ENCODE measurements at regions of chr13 and their contacts with region 1.

Region 1: GRCh38 chr13:40682449-40683240 is 16.2 kb upstream of the FOXO1 start:
- DNase-seq: no peak
- ATAC-seq: no peak
- H3K4me3 Mint-ChIP-seq: peak overlapping the region; percentile 47
- H3K27ac Mint-ChIP-seq: peak overlapping the region; percentile 32
- H3K4me1 Mint-ChIP-seq: peaks cover 38% of the 10 kb centered on the region
- H3K27me3 Mint-ChIP-seq: peaks cover 22% of the 10 kb centered on the region
- CTCF ChIP-seq: peak; percentile 65

Region 2: GRCh38 chr13:40017662-40018262 is 664.9 kb before region 1 on chr13:
- CTCF ChIA-PET with region 1: interaction called, 12 read pairs
- POLR2A ChIA-PET with region 1: no interaction called
- DNase-seq: no peak
- ATAC-seq: peak; percentile 70
- H3K4me3 Mint-ChIP-seq: no peak overlapping the region
- H3K27ac Mint-ChIP-seq: peak overlapping the region; percentile 9; the same call in 1 of the 2 replicates
- H3K4me1 Mint-ChIP-seq: peaks cover 7% of the 10 kb centered on the region
- H3K27me3 Mint-ChIP-seq: no peaks in the 10 kb centered on the region
- CTCF ChIP-seq: no peak

Region 3: DNA sequence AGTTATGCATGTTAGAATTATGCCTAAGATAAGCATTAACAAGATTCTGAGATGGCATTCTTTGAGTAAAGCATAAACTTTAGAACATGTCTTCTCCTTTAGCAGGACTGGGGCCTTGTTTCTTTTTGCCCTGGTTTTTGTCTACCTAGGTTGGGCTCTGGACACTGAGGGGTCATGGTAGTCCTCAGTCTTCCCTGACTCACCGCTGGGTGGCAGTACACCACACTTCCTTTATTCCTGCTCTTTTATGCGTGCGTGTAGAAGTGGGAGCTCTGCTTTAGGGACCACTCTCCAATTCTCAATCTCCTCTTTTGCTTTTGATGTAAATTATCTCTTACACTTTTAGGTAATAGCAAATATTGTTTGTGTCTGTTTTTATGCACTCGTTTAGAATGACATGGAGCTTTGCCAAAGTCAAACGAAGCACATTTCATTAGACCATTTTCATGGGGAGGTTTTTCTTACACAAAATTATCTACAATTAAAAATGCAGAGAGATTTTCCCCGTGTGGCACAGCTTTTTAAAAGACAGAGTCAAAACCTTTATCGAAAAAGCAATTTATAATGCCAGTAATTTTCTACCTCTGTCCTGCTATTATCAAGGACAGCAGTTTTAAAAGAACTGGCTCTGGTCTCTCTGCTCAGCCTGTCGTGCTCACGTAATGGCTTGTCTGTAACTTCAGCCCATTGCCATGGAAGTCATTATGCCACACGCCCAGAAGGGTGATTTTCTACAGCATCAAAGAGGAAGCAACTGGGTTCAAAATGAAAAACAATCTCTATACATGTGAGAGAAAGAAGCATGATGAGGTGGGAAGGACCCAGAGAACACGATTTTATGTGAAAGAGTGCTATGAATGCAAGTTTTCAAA is 613.2 kb before region 1 on chr13:
- CTCF ChIA-PET with region 1: interaction called, 11 read pairs
- POLR2A ChIA-PET with region 1: no interaction called
- DNase-seq: peak; percentile 78
- ATAC-seq: peak; percentile 95
- H3K4me3 Mint-ChIP-seq: no peak overlapping the region
- H3K27ac Mint-ChIP-seq: no peak overlapping the region
- H3K4me1 Mint-ChIP-seq: peaks cover 19% of the 10 kb centered on the region
- H3K27me3 Mint-ChIP-seq: no peaks in the 10 kb centered on the region
- CTCF ChIP-seq: peak; percentile 76

Region 4: DNA sequence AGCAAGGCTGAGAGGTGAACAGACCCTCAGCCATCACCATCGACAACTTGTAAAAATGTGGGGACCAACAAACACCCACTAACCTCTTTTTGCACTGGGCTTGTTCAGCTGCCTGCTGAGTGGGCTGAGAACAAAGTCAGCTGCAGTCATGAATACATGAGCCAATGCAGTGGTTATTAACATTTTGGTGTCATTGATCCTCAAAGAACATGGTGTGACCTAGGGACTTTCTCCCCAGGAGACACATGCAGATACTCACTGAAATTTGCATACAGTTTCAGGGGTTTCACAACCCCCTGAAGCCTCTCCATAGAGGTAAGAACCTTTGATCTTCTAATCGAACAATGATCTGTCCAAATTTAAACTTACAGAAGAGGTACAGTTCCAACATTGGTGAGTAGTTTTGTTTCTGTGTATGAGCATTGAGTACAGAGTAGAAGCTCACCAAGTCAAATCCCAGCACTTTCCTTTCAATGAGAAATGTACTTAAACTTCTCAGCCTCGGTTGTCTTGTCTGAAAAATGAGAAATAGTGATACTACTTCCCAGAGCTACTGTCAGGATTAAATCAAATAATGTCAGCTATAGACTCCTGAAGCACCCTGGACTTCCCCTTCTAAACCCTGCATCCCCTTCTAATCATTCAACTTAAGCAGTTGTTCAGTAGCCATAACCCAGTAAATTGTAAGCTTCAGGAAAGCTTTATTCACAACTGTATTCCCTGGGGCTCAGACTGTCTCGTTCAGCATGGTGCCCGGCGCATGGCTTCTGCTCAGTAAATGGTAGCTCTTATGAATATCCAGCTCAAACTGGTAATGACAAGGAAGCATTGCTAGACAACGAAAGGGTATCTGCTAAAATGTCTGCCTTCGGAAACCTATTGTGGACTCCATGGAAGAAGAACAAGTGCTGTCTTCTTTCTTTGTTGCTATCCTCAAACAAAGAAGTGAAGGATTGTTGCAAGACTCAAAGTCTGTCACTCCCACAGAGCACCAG is 164.9 kb before region 1 on chr13:
- CTCF ChIA-PET with region 1: no interaction called
- POLR2A ChIA-PET with region 1: no interaction called
- DNase-seq: no peak
- ATAC-seq: no peak
- H3K4me3 Mint-ChIP-seq: no peak overlapping the region
- H3K27ac Mint-ChIP-seq: no peak overlapping the region
- H3K4me1 Mint-ChIP-seq: peaks cover 11% of the 10 kb centered on the region
- H3K27me3 Mint-ChIP-seq: no peaks in the 10 kb centered on the region
- CTCF ChIP-seq: no peak

Region 5: DNA sequence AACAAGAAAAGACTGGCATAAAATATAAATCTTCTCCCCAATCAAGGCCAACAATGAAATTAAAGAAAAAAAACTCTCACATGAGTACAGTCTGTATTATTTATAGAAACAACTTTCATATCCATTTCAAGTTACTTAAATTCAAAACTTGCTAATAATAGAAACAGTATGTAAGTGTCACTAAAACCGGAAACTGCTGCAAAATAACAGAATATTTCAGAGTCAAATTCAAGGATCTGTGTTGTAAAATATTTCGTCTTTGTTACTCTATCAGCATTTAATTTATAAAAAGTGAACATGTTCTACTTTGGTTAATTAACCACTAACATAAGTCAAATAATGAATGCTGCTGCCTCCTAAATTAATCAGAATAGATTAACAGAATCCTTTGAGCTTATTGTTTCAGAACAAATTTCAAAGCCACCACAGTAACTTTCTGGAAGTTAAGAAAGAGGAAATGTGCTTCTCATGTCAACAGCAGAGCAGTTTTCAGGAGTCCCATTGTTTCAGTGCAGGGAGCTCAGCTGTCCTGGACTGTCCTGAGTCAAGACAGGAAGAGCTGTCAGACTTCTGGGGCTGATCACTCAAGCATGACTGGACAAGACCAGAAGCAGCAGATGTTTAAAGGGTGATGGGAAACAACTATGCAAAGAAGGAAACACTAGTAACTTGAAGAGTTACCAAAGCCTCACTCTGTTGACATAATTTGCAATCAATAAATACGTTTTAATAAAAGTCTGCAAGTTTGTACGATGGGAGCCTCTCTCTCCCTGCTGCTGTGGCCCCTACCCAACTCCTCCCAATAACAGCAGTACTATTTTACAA is 93.1 kb before region 1 on chr13:
- CTCF ChIA-PET with region 1: no interaction called
- POLR2A ChIA-PET with region 1: no interaction called
- DNase-seq: no peak
- ATAC-seq: no peak
- H3K4me3 Mint-ChIP-seq: no peak overlapping the region
- H3K27ac Mint-ChIP-seq: peak overlapping the region; percentile 52
- H3K4me1 Mint-ChIP-seq: peaks cover 88% of the 10 kb centered on the region
- H3K27me3 Mint-ChIP-seq: no peaks in the 10 kb centered on the region
- CTCF ChIP-seq: no peak

Region 6: GRCh38 chr13:40666905-40667621 is 15.6 kb before region 1 on chr13:
- CTCF ChIA-PET with region 1: interaction called, 62 read pairs
- POLR2A ChIA-PET with region 1: no interaction called
- DNase-seq: peak; percentile 59
- ATAC-seq: peak; percentile 38
- H3K4me3 Mint-ChIP-seq: peak overlapping the region; percentile 89
- H3K27ac Mint-ChIP-seq: peak overlapping the region; percentile 85
- H3K4me1 Mint-ChIP-seq: peaks cover 62% of the 10 kb centered on the region
- H3K27me3 Mint-ChIP-seq: peaks cover 4% of the 10 kb centered on the region; the same call in 1 of the 2 replicates
- CTCF ChIP-seq: no peak

Region 7: DNA sequence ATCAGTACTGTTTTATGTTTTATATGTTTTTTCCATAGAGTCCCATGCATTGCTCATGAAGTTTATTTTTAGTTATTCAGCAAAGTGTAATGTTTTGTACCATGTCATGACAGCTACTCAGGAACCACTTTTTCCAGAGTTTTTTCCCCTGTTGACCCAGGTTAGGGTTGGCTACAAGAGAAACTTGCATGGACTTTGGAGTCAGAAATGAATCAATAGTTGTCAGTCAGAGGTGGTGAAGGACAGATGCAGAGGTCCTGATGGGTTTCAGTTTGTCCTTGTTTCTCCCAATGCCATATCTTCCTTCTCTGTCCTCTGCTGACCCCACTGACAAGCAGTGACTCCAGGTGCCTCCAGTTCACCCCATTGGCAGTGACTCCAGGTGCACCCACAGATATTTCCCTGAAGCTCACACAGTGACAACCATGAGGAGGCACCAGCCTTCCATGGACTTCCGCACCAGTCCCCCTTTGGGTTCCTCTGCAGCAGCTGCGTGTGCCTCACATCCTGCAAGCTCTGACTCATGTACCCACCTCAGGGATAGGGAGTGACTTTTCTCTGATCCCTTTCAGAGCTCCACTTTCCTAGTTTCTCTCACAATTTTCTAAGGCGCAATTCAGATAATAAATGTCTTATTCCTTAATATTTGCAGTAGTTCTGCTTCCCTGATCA is 1681.4 kb after region 1 on chr13:
- CTCF ChIA-PET with region 1: no interaction called
- POLR2A ChIA-PET with region 1: no interaction called
- DNase-seq: no peak
- ATAC-seq: peak; percentile 56
- H3K4me3 Mint-ChIP-seq: no peak overlapping the region
- H3K27ac Mint-ChIP-seq: no peak overlapping the region
- H3K4me1 Mint-ChIP-seq: peaks cover 14% of the 10 kb centered on the region
- H3K27me3 Mint-ChIP-seq: no peaks in the 10 kb centered on the region
- CTCF ChIP-seq: no peak

Measured in WTC11 (cell line).